Activated CD4-positive, alpha-beta memory T cell treated with anti-CD3 and anti-CD28 coated beads for 36 hours (primary cell): ENCODE measurements at regions of chr10 and their contacts with region 1.

Region 1: DNA sequence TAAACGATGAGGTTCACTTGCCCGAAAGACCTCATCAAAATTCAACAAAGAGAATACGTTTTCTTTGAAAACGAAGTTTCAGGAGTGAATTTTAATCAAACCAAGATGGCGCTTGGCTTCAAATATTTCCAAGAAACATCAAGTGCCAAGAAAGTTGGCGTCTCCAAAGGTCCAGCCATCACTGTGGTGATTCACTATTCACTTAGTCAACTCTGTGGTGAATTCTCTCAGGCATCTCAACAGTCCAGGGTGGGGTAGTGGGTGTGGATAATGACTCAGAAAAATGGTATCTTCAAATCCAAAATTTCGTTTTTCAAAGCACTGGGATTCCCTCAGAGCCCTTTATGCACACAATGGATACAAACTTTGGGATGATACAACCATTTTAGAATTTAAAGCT is 133.1 kb downstream of the SVIL start:
- DNase-seq: no peak
- H3K4me3 Mint-ChIP-seq: no peak overlapping the region
- H3K27ac Mint-ChIP-seq: no peak overlapping the region
- H3K4me1 Mint-ChIP-seq: peaks cover under 1% of the 10 kb centered on the region
- H3K27me3 Mint-ChIP-seq: no peaks in the 10 kb centered on the region

Region 2: DNA sequence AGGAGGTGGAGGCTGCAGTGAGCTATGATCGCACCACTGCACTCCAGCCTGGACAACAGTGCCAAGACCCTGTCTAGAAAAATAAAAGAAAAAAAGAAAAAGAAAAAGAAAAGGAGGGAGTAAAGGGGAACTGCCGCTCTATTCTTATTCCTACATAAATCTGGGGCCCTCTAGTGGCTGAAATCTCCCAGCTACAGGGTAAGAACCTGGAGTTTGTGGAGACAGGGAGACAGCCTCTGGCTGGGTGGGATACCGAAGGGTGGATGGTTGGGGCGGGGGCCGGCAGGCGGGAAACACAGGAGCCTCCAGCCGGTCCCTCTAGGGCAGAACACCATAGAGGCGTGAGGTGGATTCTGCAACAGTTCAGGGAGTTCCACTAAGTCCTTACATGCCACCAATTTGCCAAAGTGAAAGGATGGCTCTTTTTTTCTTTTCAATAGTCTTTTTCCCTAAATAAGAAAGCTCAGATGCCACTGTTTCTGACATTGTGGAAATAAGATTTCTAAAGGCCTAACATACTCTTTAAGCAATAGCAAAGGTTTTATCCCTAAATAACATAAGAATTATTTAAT is 15.7 kb after region 1 on chr10:
- CTCF ChIA-PET with region 1: interaction called, 14 read pairs
- POLR2A ChIA-PET with region 1: no interaction called
- intact Hi-C with region 1: no loop called
- DNase-seq: no peak
- H3K4me3 Mint-ChIP-seq: no peak overlapping the region
- H3K27ac Mint-ChIP-seq: no peak overlapping the region
- H3K4me1 Mint-ChIP-seq: no peaks in the 10 kb centered on the region
- H3K27me3 Mint-ChIP-seq: no peaks in the 10 kb centered on the region

Region 3: DNA sequence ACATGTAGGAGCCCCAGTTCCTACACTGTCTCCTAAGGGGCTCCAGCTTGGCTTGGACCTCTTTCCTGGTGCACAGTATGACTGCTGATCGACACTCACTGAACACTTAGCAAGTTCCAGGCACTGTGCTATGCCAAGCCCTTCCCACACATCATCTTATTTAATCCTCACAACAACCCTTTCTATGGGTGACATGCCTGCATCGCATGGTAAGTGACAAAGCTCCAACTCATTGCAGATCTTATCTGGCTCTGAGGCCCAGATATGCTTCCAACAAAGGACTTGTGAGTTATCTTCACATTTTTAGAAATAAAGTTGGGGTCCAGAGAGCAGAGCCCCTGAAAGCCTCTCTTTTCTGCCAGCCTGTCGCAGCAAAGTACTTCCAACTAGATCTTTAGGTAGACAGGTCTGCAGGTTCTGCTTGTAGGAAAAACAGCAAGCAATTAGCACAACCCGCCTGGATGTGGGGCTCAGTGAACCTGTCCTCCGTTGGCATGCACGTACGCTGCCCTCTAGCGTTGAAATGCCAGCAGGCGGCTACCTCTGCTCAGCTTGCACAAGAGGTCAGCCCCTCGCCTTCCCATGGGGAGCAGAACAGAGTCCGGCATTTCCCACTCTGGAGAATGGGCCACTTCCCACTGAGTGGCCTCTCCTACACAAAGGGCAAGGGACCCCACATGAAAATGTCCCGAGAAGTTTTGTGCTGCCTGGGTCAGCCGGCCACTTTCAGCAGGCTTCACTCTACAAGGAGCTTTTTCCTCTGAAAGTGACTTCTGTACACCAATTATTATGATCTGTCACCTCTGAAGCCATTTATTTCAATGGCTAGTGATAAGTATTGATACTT is 500.6 kb after region 1 on chr10:
- CTCF ChIA-PET with region 1: no interaction called
- POLR2A ChIA-PET with region 1: no interaction called
- intact Hi-C with region 1: no loop called
- DNase-seq: peak; percentile 77
- H3K4me3 Mint-ChIP-seq: no peak overlapping the region
- H3K27ac Mint-ChIP-seq: no peak overlapping the region
- H3K4me1 Mint-ChIP-seq: peaks cover 6% of the 10 kb centered on the region
- H3K27me3 Mint-ChIP-seq: peaks cover 45% of the 10 kb centered on the region